ENCODE measurements at regions of chr12 and their contacts with region 1.

Region 1: GRCh38 chr12:107317751-107318613 is 224.6 kb upstream of the CRY1 start:
- DNase-seq: peak; percentile 69 to 94 (median 84)
- ATAC-seq: peak; percentile 56
- H3K4me3 ChIP-seq: peak overlapping the region; percentile 95
- H3K4me3 Mint-ChIP-seq: peak overlapping the region; percentile 88
- H3K27ac ChIP-seq: peak overlapping the region in 1 of 2 donors; percentile 29
- H3K27ac Mint-ChIP-seq: peak overlapping the region; percentile 78
- H3K4me1 ChIP-seq: peaks cover 38% of the 10 kb centered on the region
- H3K4me1 Mint-ChIP-seq: peaks cover 36% of the 10 kb centered on the region
- H3K27me3 ChIP-seq: no peaks in the 10 kb centered on the region
- H3K27me3 Mint-ChIP-seq: no peaks in the 10 kb centered on the region
- CTCF ChIP-seq: peak; percentile 34

Region 2: GRCh38 chr12:107131832-107132616 is 186.0 kb before region 1 on chr12:
- CTCF ChIA-PET with region 1: no interaction called
- POLR2A ChIA-PET with region 1: interaction called, 4 read pairs
- intact Hi-C with region 1: loop called (anchors 5 kb)
- DNase-seq: peak in 6 of 14 experiments; percentile 5 to 70 (median 44)
- ATAC-seq: peak; percentile 57
- H3K4me3 ChIP-seq: no peak overlapping the region
- H3K4me3 Mint-ChIP-seq: no peak overlapping the region
- H3K27ac ChIP-seq: no peak overlapping the region
- H3K27ac Mint-ChIP-seq: no peak overlapping the region
- H3K4me1 ChIP-seq: peaks cover 7% of the 10 kb centered on the region
- H3K4me1 Mint-ChIP-seq: no peaks in the 10 kb centered on the region
- H3K27me3 ChIP-seq: no peaks in the 10 kb centered on the region
- H3K27me3 Mint-ChIP-seq: no peaks in the 10 kb centered on the region
- CTCF ChIP-seq: peak; percentile 89

Region 3: GRCh38 chr12:107372229-107372658 is 54.3 kb after region 1 on chr12:
- CTCF ChIA-PET with region 1: interaction called, 5 read pairs
- POLR2A ChIA-PET with region 1: interaction called, 192 read pairs
- intact Hi-C with region 1: loop called (anchors 1 to 2 kb)
- DNase-seq: peak in 9 of 14 experiments; percentile 9 to 85 (median 30)
- ATAC-seq: peak; percentile 74
- H3K4me3 ChIP-seq: peak overlapping the region; percentile 4
- H3K4me3 Mint-ChIP-seq: peak overlapping the region; percentile 68
- H3K27ac ChIP-seq: peak overlapping the region; percentile 54 to 69
- H3K27ac Mint-ChIP-seq: peak overlapping the region; percentile 86
- H3K4me1 ChIP-seq: peaks cover 72% of the 10 kb centered on the region
- H3K4me1 Mint-ChIP-seq: peaks cover 87% of the 10 kb centered on the region
- H3K27me3 ChIP-seq: no peaks in the 10 kb centered on the region
- H3K27me3 Mint-ChIP-seq: no peaks in the 10 kb centered on the region
- CTCF ChIP-seq: no peak

Region 4: DNA sequence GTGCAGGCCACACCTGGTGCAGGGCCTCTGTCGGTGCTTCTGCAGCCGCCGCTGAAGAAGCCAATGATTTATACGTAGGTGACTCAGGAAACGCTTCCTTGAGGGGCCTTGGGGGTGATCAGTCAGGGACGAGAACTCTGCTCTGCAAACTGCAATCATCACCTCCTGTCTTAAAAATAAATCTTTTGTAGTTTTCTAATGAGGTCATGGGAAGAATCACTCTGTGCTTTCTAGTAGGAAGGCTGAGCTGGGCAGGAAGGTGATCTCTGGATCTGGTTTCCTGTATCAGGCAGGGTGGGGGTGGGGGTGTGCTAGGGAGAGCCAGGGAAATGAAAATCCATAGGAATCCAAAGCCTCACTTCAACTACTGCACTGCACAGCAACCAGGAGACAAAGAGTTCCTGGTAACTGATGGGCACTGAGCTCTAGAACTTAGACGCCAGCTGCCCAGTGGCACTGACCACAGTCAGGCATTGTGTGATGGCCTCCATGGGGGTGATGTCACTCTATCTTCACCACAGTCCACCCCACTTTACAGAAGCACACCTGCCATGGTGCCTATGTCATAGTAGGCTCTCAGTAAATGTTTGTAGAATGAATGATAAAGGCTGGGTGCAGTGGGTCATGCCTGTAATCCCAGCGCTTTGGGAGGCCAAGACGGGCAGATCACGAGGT is 75.2 kb after region 1 on chr12:
- CTCF ChIA-PET with region 1: no interaction called
- POLR2A ChIA-PET with region 1: interaction called, 59 read pairs
- intact Hi-C with region 1: no loop called
- DNase-seq: peak in 5 of 14 experiments; percentile 11 to 45 (median 21)
- ATAC-seq: peak; percentile 76
- H3K4me3 ChIP-seq: no peak overlapping the region
- H3K4me3 Mint-ChIP-seq: peak overlapping the region; percentile 32
- H3K27ac ChIP-seq: no peak overlapping the region
- H3K27ac Mint-ChIP-seq: peak overlapping the region; percentile 81
- H3K4me1 ChIP-seq: peaks cover 54% of the 10 kb centered on the region
- H3K4me1 Mint-ChIP-seq: peaks cover 83% of the 10 kb centered on the region
- H3K27me3 ChIP-seq: no peaks in the 10 kb centered on the region
- H3K27me3 Mint-ChIP-seq: no peaks in the 10 kb centered on the region
- CTCF ChIP-seq: no peak

Region 5: GRCh38 chr12:107402041-107403022 is 84.3 kb after region 1 on chr12:
- CTCF ChIA-PET with region 1: interaction called, 7 read pairs
- POLR2A ChIA-PET with region 1: interaction called, 59 read pairs
- intact Hi-C with region 1: loop called (anchors 2 kb)
- DNase-seq: peak; percentile 39 to 82 (median 53)
- ATAC-seq: peak; percentile 75
- H3K4me3 ChIP-seq: no peak overlapping the region
- H3K4me3 Mint-ChIP-seq: no peak overlapping the region
- H3K27ac ChIP-seq: no peak overlapping the region
- H3K27ac Mint-ChIP-seq: no peak overlapping the region
- H3K4me1 ChIP-seq: peaks cover 23% of the 10 kb centered on the region
- H3K4me1 Mint-ChIP-seq: peaks cover 40% of the 10 kb centered on the region
- H3K27me3 ChIP-seq: no peaks in the 10 kb centered on the region
- H3K27me3 Mint-ChIP-seq: no peaks in the 10 kb centered on the region
- CTCF ChIP-seq: peak; percentile 71

Region 6: DNA sequence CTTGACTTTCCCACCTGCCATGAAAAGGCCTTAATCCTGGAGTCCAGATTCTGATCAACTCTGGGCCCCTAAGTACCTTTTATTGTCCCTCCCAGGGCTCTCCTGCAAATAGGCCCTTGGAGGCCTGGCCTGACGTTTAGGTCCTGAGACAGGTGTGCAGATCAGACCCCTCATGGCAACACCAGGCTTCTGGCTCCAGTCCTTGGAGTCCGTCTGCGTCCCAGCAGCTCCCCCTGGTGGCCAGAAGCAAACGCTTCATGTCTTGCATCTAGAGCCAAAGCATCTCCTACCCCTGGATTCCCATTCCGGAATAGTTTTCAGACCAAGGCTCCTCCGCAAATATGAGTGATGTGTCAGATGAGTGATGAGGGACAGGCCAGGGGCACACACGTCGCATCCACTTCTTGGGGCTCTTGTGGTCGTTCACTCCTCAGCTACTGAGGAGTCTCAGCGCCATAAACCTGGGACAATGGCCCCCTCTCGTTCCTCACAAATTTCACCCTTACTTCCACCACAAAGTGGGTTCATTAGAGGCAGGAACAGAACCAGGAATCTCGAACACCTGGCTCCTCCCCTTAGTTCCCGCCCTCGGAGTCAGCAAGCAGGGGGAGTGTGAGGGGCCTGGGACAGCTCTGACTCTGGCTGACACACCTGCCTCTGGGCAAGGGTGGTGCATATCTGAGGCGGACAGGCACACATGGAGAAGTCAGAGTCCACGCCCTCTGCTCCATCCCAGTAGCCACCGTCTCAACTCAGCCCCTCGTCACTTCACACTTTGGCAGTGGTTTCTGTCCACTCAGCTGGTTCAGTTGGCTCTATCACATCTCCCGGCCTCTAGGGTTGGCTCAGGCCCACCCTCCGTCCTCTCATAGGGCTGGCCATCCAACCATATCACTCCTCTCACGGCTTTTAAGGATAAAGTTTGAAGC is 289.7 kb after region 1 on chr12:
- CTCF ChIA-PET with region 1: interaction called, 5 read pairs
- POLR2A ChIA-PET with region 1: no interaction called
- intact Hi-C with region 1: loop called (anchors 1 to 2 kb)
- DNase-seq: peak; percentile 73 to 90 (median 76)
- ATAC-seq: peak; percentile 76
- H3K4me3 ChIP-seq: no peak overlapping the region
- H3K4me3 Mint-ChIP-seq: no peak overlapping the region
- H3K27ac ChIP-seq: no peak overlapping the region
- H3K27ac Mint-ChIP-seq: no peak overlapping the region
- H3K4me1 ChIP-seq: no peaks in the 10 kb centered on the region
- H3K4me1 Mint-ChIP-seq: no peaks in the 10 kb centered on the region
- H3K27me3 ChIP-seq: no peaks in the 10 kb centered on the region
- H3K27me3 Mint-ChIP-seq: no peaks in the 10 kb centered on the region
- CTCF ChIP-seq: peak; percentile 95

Region 7: DNA sequence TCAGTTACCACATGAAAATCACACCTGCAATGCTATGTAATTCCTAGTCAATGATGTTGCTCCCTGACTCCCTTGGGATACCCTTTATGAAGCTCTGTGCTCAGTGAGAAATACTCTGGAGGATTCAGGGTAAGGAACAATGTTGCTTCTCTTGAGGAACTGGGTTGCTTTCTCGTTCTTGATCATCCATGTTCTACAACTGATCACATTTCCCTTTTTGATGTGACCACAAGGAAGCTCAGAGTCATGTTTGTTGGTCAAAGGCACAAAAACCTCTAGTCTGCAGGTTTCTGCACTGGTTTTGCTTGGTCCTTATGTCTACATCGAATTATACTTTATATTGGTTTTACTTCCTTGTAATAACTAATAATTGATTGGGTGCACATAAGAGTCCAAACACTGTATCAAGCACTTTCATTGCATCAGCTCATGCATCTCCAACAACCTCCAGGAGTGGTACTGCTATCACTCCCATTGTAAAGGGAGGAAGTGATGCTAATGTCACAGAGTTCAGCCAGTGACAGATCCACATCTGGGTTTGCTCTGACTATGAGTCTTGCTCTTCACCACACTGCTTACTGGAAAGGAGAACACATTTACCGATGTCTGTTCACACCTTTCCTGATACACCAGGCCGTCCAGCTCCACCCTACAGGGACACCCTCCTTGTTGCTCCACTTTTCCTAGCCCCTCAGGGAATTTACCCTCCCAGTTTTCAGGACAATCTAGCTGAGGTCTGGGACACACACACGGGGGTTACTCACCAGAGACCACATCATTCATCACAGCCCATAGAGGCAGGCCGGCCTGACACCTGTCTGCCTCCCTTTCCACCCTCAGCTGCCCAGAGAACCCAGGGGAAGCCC is 980.1 kb after region 1 on chr12:
- CTCF ChIA-PET with region 1: no interaction called
- POLR2A ChIA-PET with region 1: no interaction called
- intact Hi-C with region 1: no loop called
- DNase-seq: peak in 1 of 14 experiments; percentile 40
- ATAC-seq: no peak
- H3K4me3 ChIP-seq: no peak overlapping the region
- H3K4me3 Mint-ChIP-seq: peak overlapping the region; percentile 16
- H3K27ac ChIP-seq: no peak overlapping the region
- H3K27ac Mint-ChIP-seq: peak overlapping the region; percentile 66
- H3K4me1 ChIP-seq: peaks cover 18% of the 10 kb centered on the region
- H3K4me1 Mint-ChIP-seq: peaks cover 27% of the 10 kb centered on the region
- H3K27me3 ChIP-seq: peaks cover 0 to 4% of the 10 kb centered on the region in 2 experiments
- H3K27me3 Mint-ChIP-seq: no peaks in the 10 kb centered on the region
- CTCF ChIP-seq: no peak

Region 8: GRCh38 chr12:109154451-109155438 is 1836.8 kb after region 1 on chr12:
- CTCF ChIA-PET with region 1: no interaction called
- POLR2A ChIA-PET with region 1: no interaction called
- intact Hi-C with region 1: loop called in 1 of 2 experiments (anchors 10 kb)
- DNase-seq: peak; percentile 71 to 90 (median 78)
- ATAC-seq: peak; percentile 95
- H3K4me3 ChIP-seq: peak overlapping the region; percentile 75
- H3K4me3 Mint-ChIP-seq: peak overlapping the region; percentile 96
- H3K27ac ChIP-seq: peak overlapping the region in 1 of 2 donors; percentile 17
- H3K27ac Mint-ChIP-seq: peak overlapping the region; percentile 93
- H3K4me1 ChIP-seq: peaks cover 16% of the 10 kb centered on the region
- H3K4me1 Mint-ChIP-seq: peaks cover 21% of the 10 kb centered on the region
- H3K27me3 ChIP-seq: no peaks in the 10 kb centered on the region
- H3K27me3 Mint-ChIP-seq: no peaks in the 10 kb centered on the region
- CTCF ChIP-seq: no peak